ENCODE measurements at regions of chr7 and their contacts with region 1.

Region 1: DNA sequence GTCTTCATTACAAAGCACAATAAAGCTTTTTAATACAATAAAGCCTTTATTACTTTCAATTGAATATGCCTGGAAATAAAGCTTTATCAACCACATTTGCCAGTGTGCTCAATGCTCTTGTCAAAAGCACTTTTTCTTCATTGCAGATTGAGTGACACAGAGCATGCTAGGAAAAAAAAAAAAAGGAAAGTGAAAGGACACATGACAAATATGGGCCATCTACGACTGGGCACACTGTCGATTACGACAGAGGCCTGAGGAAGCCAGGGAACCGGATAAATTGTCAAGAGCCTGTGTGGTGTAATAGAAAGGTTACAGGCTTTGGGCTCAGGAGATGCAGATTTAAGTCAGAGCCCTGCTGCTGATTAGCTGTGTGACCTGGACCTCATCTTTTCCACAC is 84.8 kb upstream of the LRGUK start:
- DNase-seq: no peak
- H3K4me3 ChIP-seq: no peak overlapping the region
- H3K27ac ChIP-seq: no peak overlapping the region
- H3K4me1 ChIP-seq: peaks cover 0 to 9% (median 2%) of the 10 kb centered on the region in 4 experiments; a peak in 3 of 7 replicates
- H3K27me3 ChIP-seq: no peaks in the 10 kb centered on the region
- CTCF ChIP-seq: no peak
- EP300 ChIP-seq: no peak
- POLR2A ChIP-seq: no peak
- RAD21 ChIP-seq: no peak

Region 2: DNA sequence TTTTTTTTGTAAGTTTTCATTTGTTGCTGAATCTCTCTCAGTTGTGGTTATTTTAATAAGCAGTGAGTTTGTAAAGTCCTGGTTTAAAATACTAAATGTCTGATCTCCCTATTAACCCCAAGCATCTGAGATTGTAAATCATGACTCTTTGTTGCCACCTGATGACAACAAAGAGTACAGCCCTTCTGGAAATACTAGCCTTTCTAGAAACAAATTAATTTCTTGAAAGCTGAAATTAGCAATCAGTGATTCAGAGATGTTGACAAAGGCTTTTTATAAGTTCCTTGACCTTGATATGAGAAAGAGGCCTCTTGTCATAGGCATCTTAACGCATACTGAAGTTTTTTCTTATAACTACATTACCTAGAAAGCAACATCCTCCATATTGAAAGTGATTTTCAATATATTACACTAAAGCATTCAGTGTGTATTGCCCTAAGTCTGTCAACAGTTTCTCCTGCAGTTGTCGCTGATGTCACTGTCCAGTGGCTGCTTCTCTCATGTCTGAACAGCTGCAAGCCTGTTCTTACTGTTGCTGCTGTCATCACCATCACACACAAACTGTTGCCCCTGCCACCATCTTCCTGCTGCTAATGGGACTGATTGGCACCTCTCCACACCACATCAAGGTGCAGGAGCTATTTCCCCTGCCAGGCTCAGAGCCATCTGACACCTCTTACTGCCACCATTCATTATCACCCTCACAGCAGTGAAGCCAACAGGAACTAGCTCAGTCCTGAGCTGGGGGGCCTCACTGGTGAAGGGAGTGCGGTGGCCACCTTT is 10.3 kb before region 1 on chr7:
- CTCF ChIA-PET with region 1: interaction called, 12 read pairs
- POLR2A ChIA-PET with region 1: no interaction called
- DNase-seq: no peak
- H3K4me3 ChIP-seq: no peak overlapping the region
- H3K27ac ChIP-seq: no peak overlapping the region
- H3K4me1 ChIP-seq: peaks cover 0 to 11% (median 3%) of the 10 kb centered on the region in 4 experiments; a peak in 3 of 7 replicates
- H3K27me3 ChIP-seq: no peaks in the 10 kb centered on the region
- CTCF ChIP-seq: peak in 1 of 3 experiments; percentile 17; a peak in 2 of 4 replicates
- EP300 ChIP-seq: no peak
- POLR2A ChIP-seq: no peak
- RAD21 ChIP-seq: peak; percentile 23 to 38; a peak in 2 of 4 replicates

Region 3: DNA sequence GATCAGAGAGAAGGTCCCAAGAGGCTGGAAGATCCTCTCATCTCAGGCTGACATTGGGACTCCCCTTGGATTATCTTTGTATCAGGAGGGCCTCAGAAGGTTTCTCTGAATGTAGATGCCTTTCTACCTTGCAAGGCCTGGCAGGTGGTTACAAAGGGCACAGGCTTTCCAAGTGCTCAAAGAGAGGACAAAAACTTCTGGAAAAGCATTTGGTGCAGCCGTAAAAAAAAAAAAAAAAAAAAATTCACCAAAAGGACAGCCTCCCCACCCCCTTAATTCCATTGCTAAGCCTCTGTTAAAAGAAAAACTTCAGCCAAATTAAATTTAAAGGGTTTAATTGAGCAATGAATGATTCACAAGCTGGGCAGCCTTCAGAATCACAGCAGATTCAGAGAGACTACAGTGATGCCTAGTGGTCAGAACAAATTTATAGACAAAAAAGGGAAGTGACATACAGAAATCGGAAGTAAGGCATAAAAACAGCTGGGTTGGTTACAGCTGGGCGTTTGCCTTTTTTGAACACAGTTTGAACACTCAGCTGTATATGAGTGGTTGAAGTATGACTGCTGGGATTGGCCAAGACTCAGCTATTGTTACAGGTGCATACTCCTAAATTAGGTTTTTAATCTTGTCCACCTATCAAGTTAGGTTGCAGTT is 42.3 kb after region 1 on chr7:
- CTCF ChIA-PET with region 1: no interaction called
- POLR2A ChIA-PET with region 1: no interaction called
- DNase-seq: no peak
- H3K4me3 ChIP-seq: no peak overlapping the region
- H3K27ac ChIP-seq: no peak overlapping the region
- H3K4me1 ChIP-seq: no peaks in the 10 kb centered on the region
- H3K27me3 ChIP-seq: no peaks in the 10 kb centered on the region
- CTCF ChIP-seq: no peak
- EP300 ChIP-seq: no peak
- POLR2A ChIP-seq: no peak
- RAD21 ChIP-seq: no peak

Measured in H1 (cell line).